HCT116 (cell line): ENCODE measurements at regions of chr12 and their contacts with region 1.

Region 1: GRCh38 chr12:117685110-117685926 is 283.5 kb downstream of the KSR2 start:
- DNase-seq: no peak
- ATAC-seq: 0 out of 2 replicates have a peak, but pooled peaks have one; percentile 16
- H3K4me3 ChIP-seq: no peak overlapping the region
- H3K27ac ChIP-seq: no peak overlapping the region
- H3K4me1 ChIP-seq: peaks cover 23 to 31% of the 10 kb centered on the region in 2 experiments
- H3K27me3 ChIP-seq: peaks cover 19% of the 10 kb centered on the region; the same call in 1 of the 2 replicates
- CTCF ChIP-seq: no peak
- POLR2A ChIP-seq: no peak
- RAD21 ChIP-seq: no peak

Region 2: GRCh38 chr12:117671734-117672133 is 13.6 kb before region 1 on chr12:
- CTCF ChIA-PET with region 1: interaction called, 11 read pairs
- POLR2A ChIA-PET with region 1: interaction called, 3 read pairs
- RAD21 ChIA-PET with region 1: no interaction called
- intact Hi-C with region 1: no loop called
- DNase-seq: peak; percentile 29
- ATAC-seq: peak; percentile 90
- H3K4me3 ChIP-seq: no peak overlapping the region
- H3K27ac ChIP-seq: no peak overlapping the region
- H3K4me1 ChIP-seq: peaks cover 0 to 5% of the 10 kb centered on the region in 2 experiments; a peak in 1 of 4 replicates
- H3K27me3 ChIP-seq: 0 out of 2 replicates have a peak, but pooled peaks cover 5% of the 10 kb centered on the region
- CTCF ChIP-seq: peak; percentile 74 to 90 (median 88); a peak in 5 of 6 replicates
- POLR2A ChIP-seq: no peak
- RAD21 ChIP-seq: peak; percentile 84